ENCODE measurements at regions of chr6 and their contacts with region 1.

Region 1: GRCh38 chr6:8930009-8930408 is 494.7 kb upstream of the SLC35B3 start:
- DNase-seq: no peak

Region 2: GRCh38 chr6:8904754-8905153 is 25.3 kb before region 1 on chr6:
- intact Hi-C with region 1: loop called in 1 of 2 experiments (anchors 1 kb)
- DNase-seq: no peak

Region 3: GRCh38 chr6:8940356-8940755 is 10.3 kb after region 1 on chr6:
- intact Hi-C with region 1: loop called in 1 of 2 experiments (anchors 1 kb)
- DNase-seq: no peak

Measured in posterior vena cava (tissue), 2 donors.